ENCODE measurements at regions of chr6 and their contacts with region 1.

Region 1: GRCh38 chr6:89970609-89971337 is 76.5 kb downstream of the GJA10 start:
- DNase-seq: peak; percentile 34
- ATAC-seq: peak; percentile 72

Region 2: GRCh38 chr6:89161326-89162046 is 809.3 kb before region 1 on chr6:
- intact Hi-C with region 1: no loop called
- DNase-seq: no peak
- ATAC-seq: peak; percentile 69

Region 3: DNA sequence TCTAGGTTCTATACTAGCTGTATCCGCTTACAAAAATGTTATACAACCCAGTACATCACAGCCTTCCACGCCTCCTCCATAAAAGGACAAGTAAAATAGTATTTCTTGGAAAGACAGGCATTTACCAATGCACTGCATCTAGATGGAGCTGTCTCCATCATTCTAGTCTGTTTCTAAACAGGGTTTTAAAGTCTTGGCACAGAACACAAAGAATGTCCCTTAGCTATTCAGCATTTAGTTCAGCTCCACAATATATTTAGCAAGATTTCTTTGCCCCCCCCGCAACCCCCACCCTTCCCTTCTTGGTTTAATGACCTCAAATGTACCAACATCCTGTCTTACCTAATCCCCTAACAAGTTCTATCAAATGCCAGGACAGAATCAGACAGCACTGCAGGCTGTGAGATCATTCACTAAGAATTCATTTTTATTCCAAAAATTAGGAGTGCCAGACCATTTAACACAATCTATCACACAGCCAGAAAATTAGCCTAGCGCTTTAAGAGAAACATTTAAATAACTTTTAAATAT is 127.3 kb after region 1 on chr6:
- intact Hi-C with region 1: loop called (anchors 10 kb)
- DNase-seq: no peak
- ATAC-seq: peak; percentile 92

Region 4: DNA sequence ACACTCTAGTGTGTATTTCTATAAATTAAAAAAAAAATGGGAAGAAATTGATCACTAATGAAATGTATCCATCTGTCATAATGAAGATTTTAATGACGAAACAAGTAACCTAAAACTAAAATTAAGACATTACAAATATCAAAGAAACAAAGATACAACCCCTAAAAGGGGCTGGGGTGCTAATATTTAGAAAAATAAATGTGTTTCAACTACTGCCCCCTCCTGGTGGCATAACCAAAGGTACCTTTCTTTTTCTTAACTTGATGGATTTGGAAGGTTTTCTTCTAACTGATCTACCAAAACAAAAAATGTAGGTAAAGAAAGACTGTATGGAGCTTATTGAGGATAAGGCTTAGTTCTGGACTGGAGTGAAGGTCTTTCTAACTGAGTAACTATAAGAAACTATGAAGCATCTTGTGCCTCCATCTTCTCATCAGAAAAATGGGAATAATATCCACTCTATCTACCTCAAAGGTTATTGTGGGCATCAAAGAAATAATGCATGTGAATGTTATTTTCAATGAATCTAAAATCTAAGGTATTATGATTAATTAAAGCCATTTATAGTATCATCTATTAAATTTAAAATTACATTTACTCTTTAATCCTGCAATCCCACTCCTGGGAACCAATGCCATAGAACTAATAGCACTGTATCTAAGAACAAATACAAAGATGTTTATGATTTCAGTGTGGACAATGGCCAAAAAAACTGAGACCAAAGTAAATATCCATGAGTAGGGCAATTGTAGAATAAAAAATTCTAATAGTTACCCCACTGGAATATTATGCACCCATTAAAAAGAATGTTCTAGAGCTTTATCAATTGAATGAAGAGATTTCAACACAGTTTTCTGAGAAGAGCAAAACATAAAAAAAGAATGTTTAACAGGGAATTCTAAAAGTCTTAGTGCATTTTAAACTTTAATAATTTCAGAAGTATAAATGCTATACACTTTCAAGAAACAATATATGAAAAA is 208.7 kb after region 1 on chr6:
- intact Hi-C with region 1: loop called (anchors 10 kb)
- DNase-seq: no peak
- ATAC-seq: no peak

Region 5: GRCh38 chr6:90296346-90297114 is 325.8 kb after region 1 on chr6 and contains the start of gene BACH2:
- intact Hi-C with region 1: loop called (anchors 5 kb)
- DNase-seq: peak; percentile 94
- ATAC-seq: peak; percentile 77
- total RNA-seq, gene BACH2: 2.2 TPM

Region 6: GRCh38 chr6:90393232-90393884 is 422.6 kb after region 1 on chr6:
- intact Hi-C with region 1: loop called (anchors 2 kb)
- DNase-seq: no peak
- ATAC-seq: peak; percentile 72

Region 7: GRCh38 chr6:90478789-90479602 is 508.2 kb after region 1 on chr6:
- intact Hi-C with region 1: loop called (anchors 1 kb)
- DNase-seq: peak; percentile 87
- ATAC-seq: peak; percentile 99

Measured in Right ventricle myocardium inferior (tissue), 1 donor.